ENCODE measurements at regions of chr5 and their contacts with region 1.

Region 1: GRCh38 chr5:147098233-147098790 is 136.5 kb upstream of the STK32A start:
- DNase-seq: peak; percentile 64
- H3K4me3 Mint-ChIP-seq: no peak overlapping the region
- H3K27ac Mint-ChIP-seq: no peak overlapping the region
- H3K4me1 Mint-ChIP-seq: no peaks in the 10 kb centered on the region
- H3K27me3 Mint-ChIP-seq: no peaks in the 10 kb centered on the region

Region 2: DNA sequence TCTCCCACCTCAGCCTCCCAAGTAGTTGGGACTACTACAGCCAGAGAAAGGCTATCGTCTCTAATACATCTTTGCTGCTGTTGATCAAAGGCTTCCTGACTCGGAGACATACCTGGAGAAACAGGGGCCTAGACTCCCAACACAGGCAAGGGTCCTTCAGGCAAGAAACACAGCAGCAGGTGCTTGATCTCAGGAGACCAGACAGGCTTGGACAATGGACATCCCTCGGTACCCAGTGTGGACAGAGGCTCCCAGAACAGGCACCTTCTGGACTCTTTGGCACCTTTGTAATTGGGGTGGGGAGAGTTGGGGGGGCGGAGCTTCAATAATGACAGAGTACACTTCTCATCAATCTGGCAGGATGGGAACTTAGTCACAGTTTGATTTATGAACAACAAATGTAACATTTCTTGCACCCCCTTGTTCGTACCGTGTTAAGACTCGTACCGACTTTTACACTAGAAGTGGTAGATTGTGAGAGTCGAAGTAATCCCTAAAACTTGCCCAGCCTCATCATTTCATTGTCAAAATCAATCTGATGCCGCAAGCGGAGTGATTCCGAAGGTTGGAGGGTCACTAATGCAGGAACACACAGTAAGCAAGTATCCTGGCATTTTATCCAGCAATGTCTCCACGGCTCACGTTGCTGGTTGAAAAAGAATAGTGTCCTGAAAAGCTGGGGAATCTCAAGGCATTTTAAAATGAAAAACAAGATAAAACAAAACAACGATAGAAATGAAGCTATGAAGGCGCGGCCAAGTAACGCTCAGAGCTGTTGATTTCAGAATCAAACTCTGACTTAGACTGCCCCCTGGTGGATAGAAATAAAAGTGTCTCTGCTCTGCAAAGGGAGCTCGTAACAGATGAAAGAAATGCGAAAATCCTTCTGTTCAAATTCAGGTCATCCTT is 90.1 kb after region 1 on chr5:
- intact Hi-C with region 1: loop called (anchors 10 kb)
- DNase-seq: peak; percentile 85
- H3K4me3 Mint-ChIP-seq: no peak overlapping the region
- H3K27ac Mint-ChIP-seq: no peak overlapping the region
- H3K4me1 Mint-ChIP-seq: peaks cover 4% of the 10 kb centered on the region
- H3K27me3 Mint-ChIP-seq: peaks cover 1% of the 10 kb centered on the region

Measured in activated CD4-positive, alpha-beta T cell treated with anti-CD3 and anti-CD28 coated beads, Interleukin-2, amount 10 ng/mL, durations not matched to agents 24 days and 14 days (primary cell).